ENCODE measurements at regions of chr12 and their contacts with region 1.

Region 1: DNA sequence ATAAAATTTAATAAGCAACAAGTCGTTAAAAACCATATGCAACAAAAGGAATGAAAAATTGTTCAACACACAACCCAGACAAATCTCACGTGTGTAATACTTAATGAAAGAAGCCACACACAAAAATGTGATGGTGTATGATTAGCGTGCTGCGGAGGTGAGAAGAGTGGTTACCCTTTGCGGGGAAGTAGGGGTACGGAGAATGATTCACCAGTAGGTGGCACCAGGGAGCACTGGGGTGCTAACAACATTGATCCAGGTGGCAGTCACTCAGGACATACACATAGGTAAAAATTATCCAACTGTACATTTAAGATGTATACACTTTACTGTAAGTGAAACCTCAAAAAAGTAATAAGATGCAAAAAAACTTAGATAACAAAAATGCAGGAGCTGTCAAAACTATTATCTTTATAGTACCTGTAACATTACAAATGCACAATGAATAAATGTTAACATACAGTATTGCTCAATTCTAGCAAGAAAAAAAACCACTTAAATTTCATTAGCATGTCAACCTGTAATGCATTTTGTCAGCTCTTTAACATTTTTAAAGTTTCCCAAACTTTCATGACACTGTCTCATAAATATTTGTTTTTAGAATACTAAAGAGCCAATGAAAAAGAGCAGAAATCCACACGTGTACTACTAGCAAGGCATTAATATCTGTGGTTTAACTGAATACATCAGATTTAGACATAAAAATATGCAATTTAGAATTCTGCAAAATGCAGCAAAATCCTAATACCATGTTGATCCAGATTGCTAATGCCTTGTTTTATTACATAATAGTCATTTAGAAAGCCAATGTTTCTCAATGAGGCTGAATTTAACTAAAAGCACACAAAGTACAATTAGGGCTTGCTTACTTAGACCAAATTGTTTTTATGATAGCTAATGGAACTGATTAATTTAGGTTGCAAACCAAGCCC is 46.7 kb downstream of the TMCC3 start:
- DNase-seq: peak in 1 of 2 experiments; percentile 61
- H3K4me3 ChIP-seq: no peak overlapping the region
- H3K4me3 Mint-ChIP-seq: no peak overlapping the region
- H3K27ac Mint-ChIP-seq: no peak overlapping the region
- H3K4me1 ChIP-seq: no peaks in the 10 kb centered on the region
- H3K4me1 Mint-ChIP-seq: no peaks in the 10 kb centered on the region
- H3K27me3 ChIP-seq: no peaks in the 10 kb centered on the region
- H3K27me3 Mint-ChIP-seq: no peaks in the 10 kb centered on the region
- CTCF ChIP-seq: peak; percentile 51 to 66

Region 2: GRCh38 chr12:94753036-94753679 is 149.5 kb after region 1 on chr12:
- CTCF ChIA-PET with region 1: interaction called, 3 read pairs
- POLR2A ChIA-PET with region 1: no interaction called
- intact Hi-C with region 1: loop called (anchors 5 kb)
- DNase-seq: no peak
- H3K4me3 ChIP-seq: no peak overlapping the region
- H3K4me3 Mint-ChIP-seq: no peak overlapping the region
- H3K27ac Mint-ChIP-seq: no peak overlapping the region
- H3K4me1 ChIP-seq: peaks cover 6% of the 10 kb centered on the region; the same call in 1 of the 2 replicates
- H3K4me1 Mint-ChIP-seq: peaks cover 21% of the 10 kb centered on the region
- H3K27me3 ChIP-seq: no peaks in the 10 kb centered on the region
- H3K27me3 Mint-ChIP-seq: peaks cover 2% of the 10 kb centered on the region
- CTCF ChIP-seq: peak in 1 of 2 experiments; percentile 2

Measured in Caco-2 (cell line).